ENCODE measurements at regions of chr2 and their contacts with region 1.

Region 1: GRCh38 chr2:13006829-13007717 is 290.3 kb downstream of the TRIB2 start:
- DNase-seq: peak; percentile 42
- ATAC-seq: peak; percentile 91

Region 2: GRCh38 chr2:11829947-11830707 is 1176.9 kb before region 1 on chr2:
- intact Hi-C with region 1: loop called (anchors 5 kb)
- DNase-seq: peak; percentile 62
- ATAC-seq: peak; percentile 83

Region 3: GRCh38 chr2:12719400-12720277 is 287.4 kb before region 1 on chr2:
- intact Hi-C with region 1: loop called (anchors 5 kb)
- DNase-seq: no peak
- ATAC-seq: no peak

Region 4: DNA sequence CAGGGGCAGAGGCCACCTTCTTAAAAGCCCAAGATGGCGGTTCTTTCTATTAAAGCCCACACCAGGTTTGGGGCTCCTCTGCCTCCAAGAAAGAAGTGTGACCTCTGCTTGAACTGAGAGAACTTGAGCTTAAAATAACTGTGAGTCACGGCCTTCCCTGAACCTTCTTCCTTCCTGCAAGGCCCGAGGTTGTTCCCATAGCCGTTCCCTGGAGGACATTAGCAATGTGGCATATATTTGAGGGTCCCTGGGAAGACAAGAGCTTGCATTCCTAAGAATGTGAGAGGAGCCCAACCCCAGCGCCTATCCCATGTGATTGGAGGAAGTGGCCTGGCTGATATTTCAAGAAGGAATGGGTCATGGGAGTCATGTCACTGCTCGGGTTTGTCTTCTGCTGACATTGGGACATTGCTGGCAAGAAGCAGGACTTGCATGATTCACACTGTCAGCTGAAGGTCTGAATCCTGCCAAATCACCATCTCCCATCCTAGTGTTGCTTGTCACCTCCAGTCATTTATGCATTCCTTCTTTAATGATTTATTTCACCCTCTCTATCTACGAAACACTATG is 122.3 kb before region 1 on chr2:
- intact Hi-C with region 1: no loop called
- DNase-seq: peak; percentile 38
- ATAC-seq: peak; percentile 88

Region 5: GRCh38 chr2:12931186-12931844 is 75.8 kb before region 1 on chr2:
- intact Hi-C with region 1: loop called (anchors 5 kb)
- DNase-seq: no peak
- ATAC-seq: peak; percentile 91

Region 6: DNA sequence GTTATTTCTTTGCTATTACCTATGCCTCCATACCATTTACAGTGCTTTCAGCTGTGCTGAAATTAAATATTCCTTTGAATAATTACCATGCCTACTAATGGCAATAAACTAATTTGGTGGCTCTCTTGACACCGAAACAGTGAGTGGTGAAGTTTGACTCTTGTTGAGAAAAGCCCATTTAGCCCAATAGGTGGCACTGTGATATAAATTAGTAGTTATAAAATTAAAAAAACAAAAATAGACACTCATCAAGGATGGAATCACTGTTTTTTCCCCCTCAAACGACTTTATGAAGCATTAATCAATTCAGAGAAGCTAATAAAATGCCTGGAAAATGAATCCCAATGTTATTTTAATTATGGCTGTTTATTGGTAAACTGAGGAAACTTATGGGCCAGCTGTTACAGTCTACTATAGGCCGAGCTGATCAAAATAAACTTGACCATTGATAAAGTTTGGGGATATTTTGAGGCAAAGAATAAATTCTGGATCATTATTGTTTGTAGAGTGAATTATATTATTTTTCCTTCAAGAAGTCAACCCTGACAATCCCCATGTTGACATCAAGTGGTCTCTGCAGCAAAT is 49.3 kb after region 1 on chr2:
- intact Hi-C with region 1: no loop called
- DNase-seq: no peak
- ATAC-seq: no peak